IMR-90 (cell line): ENCODE measurements at regions of chr2 and their contacts with region 1.

Region 1: DNA sequence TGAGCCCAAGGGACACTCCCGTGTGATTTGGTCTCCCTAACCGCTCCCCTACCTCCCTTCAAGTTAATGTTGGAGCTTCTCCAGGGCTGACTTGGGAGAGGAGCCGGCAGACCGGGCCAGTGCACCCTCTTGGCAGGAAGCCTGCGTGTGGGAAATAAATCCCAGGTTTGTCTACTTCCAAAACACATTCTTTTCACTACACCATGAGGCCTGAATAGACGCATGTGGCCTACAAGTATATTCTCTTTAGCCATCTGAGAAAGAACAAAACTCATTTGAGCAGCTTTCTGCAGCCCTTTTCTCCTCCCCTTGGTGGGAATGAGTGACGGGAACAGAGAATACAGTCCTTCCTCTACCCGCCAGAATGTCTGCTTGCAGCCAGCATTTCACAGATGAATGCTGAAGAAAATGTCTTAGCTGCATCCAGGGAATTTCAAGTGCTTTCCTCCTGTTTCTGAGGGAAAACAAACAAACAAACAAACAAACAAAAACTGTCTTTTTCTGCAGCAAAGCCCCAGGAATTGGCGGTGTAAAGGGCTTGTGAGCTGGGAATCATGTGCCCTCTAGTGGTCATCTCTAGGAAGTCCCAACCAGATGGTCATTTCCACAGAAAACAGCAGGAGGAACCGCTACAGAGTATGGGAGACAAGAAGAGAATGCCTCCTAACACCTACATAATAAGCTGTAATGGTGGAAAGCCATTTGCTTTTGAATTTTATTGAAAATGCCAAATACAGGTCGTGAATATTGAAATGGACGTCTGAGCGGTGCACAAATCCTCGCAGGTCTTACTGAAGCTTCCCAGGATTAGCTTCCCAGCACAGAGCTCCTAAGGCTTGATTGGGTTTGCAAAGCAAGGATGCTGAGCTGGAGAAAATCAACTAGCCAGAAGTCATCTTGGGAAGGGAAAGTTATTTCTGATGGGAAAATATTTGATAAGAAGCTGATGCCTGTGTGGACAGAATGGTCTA is 41.2 kb upstream of the DAPL1 start:
- DNase-seq: peak; percentile 68
- ATAC-seq: peak; percentile 95
- H3K4me3 ChIP-seq: no peak overlapping the region
- H3K27ac ChIP-seq: no peak overlapping the region
- H3K4me1 ChIP-seq: no peaks in the 10 kb centered on the region
- H3K27me3 ChIP-seq: peaks cover 11% of the 10 kb centered on the region
- CTCF ChIP-seq: peak; percentile 88
- POLR2A ChIP-seq: no peak
- RAD21 ChIP-seq: peak; percentile 88

Region 2: DNA sequence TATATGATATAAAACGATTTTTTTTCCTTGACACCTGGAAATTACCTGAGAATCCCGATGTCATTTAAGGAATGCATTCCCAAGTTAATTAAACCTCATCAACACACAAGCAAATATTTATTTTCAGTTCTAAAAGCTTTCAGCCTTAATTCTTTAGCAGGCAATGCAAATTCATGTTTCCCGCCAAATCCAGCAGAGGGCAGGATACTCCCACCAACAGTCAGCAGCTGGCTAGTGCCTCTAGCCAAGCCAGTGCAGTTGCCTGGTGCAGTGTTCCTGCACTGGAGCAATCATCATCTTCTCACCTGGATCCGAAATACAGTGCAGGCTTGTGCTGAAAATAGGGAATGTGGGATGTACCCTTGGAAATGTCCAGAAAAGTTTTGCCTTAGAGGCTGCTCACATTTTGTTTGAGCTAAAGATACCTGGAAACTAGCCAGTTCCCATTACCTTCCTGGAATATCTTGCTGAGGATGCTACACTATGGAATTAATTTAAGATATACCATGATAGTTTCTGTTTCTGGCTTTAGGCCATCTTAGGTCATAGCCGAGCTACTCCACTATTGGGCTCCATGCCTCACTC is 1261.6 kb before region 1 on chr2:
- CTCF ChIA-PET with region 1: no interaction called
- POLR2A ChIA-PET with region 1: no interaction called
- dilution Hi-C with region 1: no loop called
- in situ Hi-C with region 1: no loop called
- intact Hi-C with region 1: loop called (anchors 10 kb)
- DNase-seq: peak; percentile 59
- ATAC-seq: peak; percentile 93
- H3K4me3 ChIP-seq: no peak overlapping the region
- H3K27ac ChIP-seq: no peak overlapping the region
- H3K4me1 ChIP-seq: no peaks in the 10 kb centered on the region
- H3K27me3 ChIP-seq: peaks cover 2% of the 10 kb centered on the region
- CTCF ChIP-seq: peak; percentile 69
- POLR2A ChIP-seq: no peak
- RAD21 ChIP-seq: peak; percentile 69

Region 3: DNA sequence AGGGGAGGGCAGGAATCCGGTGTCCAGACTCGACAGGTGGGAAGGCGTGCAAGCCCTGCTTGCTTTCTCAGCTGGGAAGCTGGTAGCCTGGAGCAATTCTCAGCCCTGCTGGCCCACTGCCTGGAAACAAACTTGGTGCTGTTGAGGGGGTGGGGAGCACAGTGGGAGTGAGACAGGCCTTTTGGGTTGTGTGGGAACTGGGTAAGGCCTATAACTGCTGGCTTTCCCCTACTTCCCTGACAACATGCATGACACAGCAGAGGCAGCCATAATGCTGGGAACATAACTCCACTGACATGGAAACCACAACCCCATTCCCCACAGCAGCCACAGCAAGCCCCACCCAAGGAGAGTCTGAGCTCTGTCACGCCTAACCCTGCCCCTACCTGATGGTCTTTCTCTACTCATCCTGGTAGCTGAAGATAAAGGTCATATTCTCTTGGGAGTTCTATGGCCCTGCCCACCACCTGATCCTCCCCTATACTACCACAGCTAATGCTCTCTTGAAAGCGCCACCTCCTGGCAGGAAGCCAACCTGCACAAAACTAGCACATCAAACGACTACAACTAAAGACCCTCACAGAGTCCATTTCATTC is 1002.4 kb before region 1 on chr2:
- CTCF ChIA-PET with region 1: no interaction called
- POLR2A ChIA-PET with region 1: no interaction called
- dilution Hi-C with region 1: no loop called
- in situ Hi-C with region 1: loop called (anchors 25 kb)
- intact Hi-C with region 1: no loop called
- DNase-seq: peak; percentile 57
- ATAC-seq: no peak
- H3K4me3 ChIP-seq: no peak overlapping the region
- H3K27ac ChIP-seq: no peak overlapping the region
- H3K4me1 ChIP-seq: peaks cover 4% of the 10 kb centered on the region
- H3K27me3 ChIP-seq: no peaks in the 10 kb centered on the region
- CTCF ChIP-seq: no peak
- POLR2A ChIP-seq: no peak
- RAD21 ChIP-seq: no peak

Region 4: GRCh38 chr2:158024288-158024898 is 729.5 kb before region 1 on chr2:
- CTCF ChIA-PET with region 1: interaction called, 8 read pairs
- POLR2A ChIA-PET with region 1: no interaction called
- dilution Hi-C with region 1: no loop called
- in situ Hi-C with region 1: no loop called
- intact Hi-C with region 1: loop called (anchors 1 kb)
- DNase-seq: peak; percentile 31
- ATAC-seq: peak; percentile 76
- H3K4me3 ChIP-seq: no peak overlapping the region
- H3K27ac ChIP-seq: no peak overlapping the region
- H3K4me1 ChIP-seq: peaks cover 2% of the 10 kb centered on the region; the same call in 1 of the 2 replicates
- H3K27me3 ChIP-seq: peaks cover 6% of the 10 kb centered on the region; the same call in 1 of the 2 replicates
- CTCF ChIP-seq: peak; percentile 82
- POLR2A ChIP-seq: no peak
- RAD21 ChIP-seq: peak; percentile 70

Region 5: GRCh38 chr2:158179660-158180059 is 574.3 kb before region 1 on chr2:
- CTCF ChIA-PET with region 1: interaction called, 3 read pairs
- POLR2A ChIA-PET with region 1: no interaction called
- dilution Hi-C with region 1: no loop called
- in situ Hi-C with region 1: loop called (anchors 5 kb)
- intact Hi-C with region 1: loop called (anchors 1 kb)
- DNase-seq: peak; percentile 26
- ATAC-seq: peak; percentile 54
- H3K4me3 ChIP-seq: no peak overlapping the region
- H3K27ac ChIP-seq: no peak overlapping the region
- H3K4me1 ChIP-seq: no peaks in the 10 kb centered on the region
- H3K27me3 ChIP-seq: peaks cover 2% of the 10 kb centered on the region
- CTCF ChIP-seq: peak; percentile 54
- POLR2A ChIP-seq: no peak
- RAD21 ChIP-seq: peak; percentile 66

Region 6: DNA sequence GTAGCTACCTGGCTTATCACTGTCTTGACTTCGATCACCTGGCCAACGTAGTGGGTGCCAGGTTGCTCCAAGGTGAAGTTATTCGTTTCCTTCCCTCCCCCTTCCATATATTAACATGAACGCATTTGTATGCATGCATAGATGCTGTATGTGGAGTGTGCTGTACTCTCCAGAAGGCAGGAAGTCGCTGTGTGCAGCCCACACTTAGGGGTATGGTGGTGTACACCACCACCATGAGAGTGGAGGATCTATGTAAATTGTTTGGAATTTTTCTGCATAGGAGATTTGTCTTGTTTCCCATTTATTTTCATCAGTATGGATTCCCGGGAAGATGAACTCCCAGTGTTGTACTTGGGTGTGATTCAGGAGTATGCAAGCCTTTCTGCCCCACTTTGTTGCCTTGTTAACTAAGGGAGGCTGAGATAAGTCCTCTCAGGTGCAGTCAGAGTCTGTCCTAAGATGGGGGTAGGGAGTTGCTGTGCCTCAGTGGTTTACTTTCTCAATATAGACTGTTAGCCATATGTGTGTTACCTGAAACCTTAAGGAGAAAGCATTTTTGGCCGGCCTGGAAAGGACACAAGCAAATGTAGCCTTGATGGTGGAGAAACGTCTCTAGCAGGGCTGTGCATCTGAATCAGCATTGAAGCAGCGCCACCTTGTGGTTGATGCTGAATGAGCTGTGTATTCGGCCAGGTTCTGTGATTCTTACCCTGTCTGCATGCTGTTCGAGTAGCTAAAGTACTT is 364.4 kb after region 1 on chr2:
- CTCF ChIA-PET with region 1: no interaction called
- POLR2A ChIA-PET with region 1: no interaction called
- dilution Hi-C with region 1: no loop called
- in situ Hi-C with region 1: no loop called
- intact Hi-C with region 1: loop called (anchors 1 kb)
- DNase-seq: peak; percentile 88
- ATAC-seq: peak; percentile 97
- H3K4me3 ChIP-seq: no peak overlapping the region
- H3K27ac ChIP-seq: no peak overlapping the region
- H3K4me1 ChIP-seq: peaks cover 12% of the 10 kb centered on the region
- H3K27me3 ChIP-seq: no peaks in the 10 kb centered on the region
- CTCF ChIP-seq: peak; percentile 92
- POLR2A ChIP-seq: peak; percentile 51; the same call in 1 of the 2 replicates
- RAD21 ChIP-seq: peak; percentile 99